Vagina (tissue), 2 donors: ENCODE measurements at regions of chrX and their contacts with region 1.

Region 1: DNA sequence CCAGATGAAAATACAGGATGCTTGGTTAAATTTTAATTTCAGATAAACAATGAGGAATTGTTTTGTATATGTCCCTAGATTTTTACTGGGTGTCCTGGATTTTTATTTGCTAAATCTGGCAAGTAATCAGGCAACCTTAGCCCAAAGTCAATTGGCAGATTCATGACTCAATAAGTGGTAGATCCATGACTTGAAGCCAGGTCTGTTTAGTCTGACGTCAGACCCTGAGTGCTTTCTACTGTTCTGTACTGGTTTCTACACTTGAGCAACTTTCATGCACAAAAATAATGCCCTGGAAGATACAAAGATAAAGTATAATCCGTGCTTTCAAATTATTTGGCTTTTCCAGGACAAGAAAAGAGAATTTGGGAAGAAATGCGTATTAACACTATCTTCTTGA is 74.9 kb downstream of the FMR1NB start:
- DNase-seq: no peak
- H3K4me3 ChIP-seq: no peak overlapping the region
- H3K27ac ChIP-seq: no peak overlapping the region
- H3K4me1 ChIP-seq: no peaks in the 10 kb centered on the region
- H3K27me3 ChIP-seq: no peaks in the 10 kb centered on the region
- CTCF ChIP-seq: no peak
- POLR2A ChIP-seq: no peak

Region 2: DNA sequence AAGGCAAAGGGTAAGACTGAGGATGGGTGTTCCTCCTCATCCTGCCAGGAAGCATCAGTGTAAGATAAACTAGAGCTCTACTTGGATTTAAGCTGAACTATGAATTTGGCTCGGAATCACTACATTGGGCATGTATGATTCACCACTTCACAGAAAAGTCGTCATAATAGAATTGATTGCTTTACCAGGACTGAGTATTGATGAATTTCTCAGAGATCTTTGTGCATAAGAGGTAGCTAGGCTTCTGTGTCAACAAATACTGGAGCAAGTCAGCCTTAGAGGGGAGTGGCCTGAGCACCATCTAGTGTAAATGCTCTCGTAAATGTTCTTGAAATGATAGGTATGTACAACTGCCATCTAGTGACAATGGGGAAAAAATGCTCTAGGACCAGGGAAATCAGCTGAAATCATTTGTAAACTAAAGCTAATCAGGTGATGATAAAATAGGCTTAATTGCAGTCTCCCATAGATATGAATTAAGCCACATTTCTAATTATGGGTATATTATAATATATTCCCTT is 453.8 kb before region 1 on chrX:
- intact Hi-C with region 1: no loop called
- DNase-seq: no peak
- H3K4me3 ChIP-seq: no peak overlapping the region
- H3K27ac ChIP-seq: no peak overlapping the region
- H3K4me1 ChIP-seq: no peaks in the 10 kb centered on the region
- H3K27me3 ChIP-seq: no peaks in the 10 kb centered on the region
- CTCF ChIP-seq: no peak
- POLR2A ChIP-seq: no peak

Region 3: DNA sequence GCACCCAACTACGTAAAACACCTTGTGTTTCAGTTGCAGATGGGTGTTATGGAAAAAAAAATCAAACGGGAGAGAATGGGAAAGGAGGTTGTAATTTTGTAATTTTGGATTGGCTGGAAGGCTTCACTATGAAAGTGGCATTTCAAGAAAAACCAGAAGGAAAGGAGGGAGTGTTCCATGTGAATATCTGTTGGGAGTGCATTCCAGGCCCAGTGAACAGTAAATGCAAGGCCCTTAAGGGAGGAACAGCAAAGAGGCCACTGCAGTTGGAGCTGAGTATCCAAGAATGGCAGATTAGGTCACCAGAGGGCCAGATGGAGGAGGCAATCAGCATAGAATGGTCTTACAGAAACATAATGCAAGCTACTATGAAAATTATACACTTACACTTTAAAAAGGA is 340.1 kb before region 1 on chrX:
- intact Hi-C with region 1: no loop called
- DNase-seq: no peak
- H3K4me3 ChIP-seq: no peak overlapping the region
- H3K27ac ChIP-seq: no peak overlapping the region
- H3K4me1 ChIP-seq: no peaks in the 10 kb centered on the region
- H3K27me3 ChIP-seq: no peaks in the 10 kb centered on the region
- CTCF ChIP-seq: no peak
- POLR2A ChIP-seq: no peak

Region 4: DNA sequence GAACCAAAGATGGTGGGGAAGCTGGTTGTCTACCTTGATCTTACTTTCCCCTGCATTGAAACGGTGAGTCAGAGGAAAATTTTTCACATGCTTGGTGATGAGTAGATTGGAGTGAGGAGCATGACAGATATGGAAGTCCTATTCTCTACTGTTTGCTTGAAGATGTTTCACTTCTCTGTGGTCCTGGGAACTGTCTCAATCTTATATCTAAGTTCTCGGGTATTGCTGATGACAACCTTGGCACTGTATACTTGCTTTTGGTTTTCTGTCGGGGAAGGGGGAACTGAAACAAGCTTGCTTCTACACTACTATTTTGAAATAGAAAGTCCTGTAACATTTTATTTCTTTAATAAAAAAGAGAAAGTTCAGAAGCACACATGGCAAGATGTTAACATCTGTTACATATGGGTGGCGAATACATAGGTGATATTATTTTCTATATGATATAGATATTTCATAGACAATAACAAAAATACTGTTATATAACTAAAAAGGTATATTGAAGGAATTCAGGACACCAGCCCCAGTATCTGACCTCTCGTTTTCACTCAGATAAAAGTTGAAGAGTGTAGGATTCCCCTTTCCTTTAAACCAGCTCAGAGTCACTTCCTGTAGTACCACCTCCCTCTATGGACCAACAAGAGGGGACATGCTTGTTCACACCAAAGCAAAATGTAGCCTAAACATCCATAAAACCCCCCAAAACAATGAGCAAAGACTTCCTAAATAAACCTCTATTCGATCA is 13.9 kb after region 1 on chrX:
- intact Hi-C with region 1: no loop called
- DNase-seq: no peak
- H3K4me3 ChIP-seq: no peak overlapping the region
- H3K27ac ChIP-seq: no peak overlapping the region
- H3K4me1 ChIP-seq: no peaks in the 10 kb centered on the region
- H3K27me3 ChIP-seq: no peaks in the 10 kb centered on the region
- CTCF ChIP-seq: no peak
- POLR2A ChIP-seq: no peak

Region 5: DNA sequence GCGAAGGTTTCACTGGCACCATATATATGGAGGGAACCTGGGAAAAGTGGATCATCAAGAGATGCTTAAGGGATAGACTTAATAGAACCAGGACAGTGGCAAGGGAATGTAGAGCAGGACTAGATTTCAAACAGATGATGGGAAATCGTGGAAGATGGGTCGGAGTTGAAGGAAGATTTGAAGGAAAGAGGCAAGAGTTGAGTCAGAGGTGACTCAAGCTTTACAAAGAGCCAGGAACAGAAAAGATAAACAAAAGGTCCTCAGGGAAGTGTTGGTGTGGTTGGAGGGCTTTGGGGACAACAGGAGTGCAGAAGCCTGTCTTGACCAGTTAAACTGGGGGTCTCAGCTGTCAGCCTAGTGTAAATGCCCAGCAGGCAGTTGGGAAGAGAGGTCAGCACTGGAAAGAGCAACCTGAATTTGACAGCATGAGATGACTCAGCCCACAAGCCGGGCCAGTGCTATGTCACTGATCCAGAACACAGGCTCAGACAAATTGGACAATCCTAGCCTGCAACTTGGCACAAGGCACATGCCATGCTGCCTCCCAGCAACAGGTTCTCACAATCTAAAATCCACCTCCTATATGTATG is 1218.6 kb after region 1 on chrX:
- intact Hi-C with region 1: loop called (anchors 5 kb)
- DNase-seq: no peak
- H3K4me3 ChIP-seq: no peak overlapping the region
- H3K27ac ChIP-seq: no peak overlapping the region
- H3K4me1 ChIP-seq: no peaks in the 10 kb centered on the region
- H3K27me3 ChIP-seq: no peaks in the 10 kb centered on the region
- CTCF ChIP-seq: no peak
- POLR2A ChIP-seq: no peak